ENCODE measurements at regions of chr3 and their contacts with region 1.

Region 1: GRCh38 chr3:192887047-192887446 is 30.6 kb downstream of the MB21D2 start:
- DNase-seq: peak in 2 of 5 donors; percentile 5 to 45
- H3K4me3 ChIP-seq: no peak overlapping the region
- H3K4me3 Mint-ChIP-seq: peak overlapping the region; percentile 20 to 84 (median 68)
- H3K27ac ChIP-seq: no peak overlapping the region
- H3K27ac Mint-ChIP-seq: peak overlapping the region; percentile 41 to 86 (median 72)
- H3K4me1 ChIP-seq: peaks cover 57% of the 10 kb centered on the region
- H3K4me1 Mint-ChIP-seq: peaks cover 6 to 55% (median 34%) of the 10 kb centered on the region in 4 donors
- H3K27me3 ChIP-seq: no peaks in the 10 kb centered on the region
- H3K27me3 Mint-ChIP-seq: no peaks in the 10 kb centered on the region

Region 2: GRCh38 chr3:192864941-192865340 is 22.1 kb before region 1 on chr3:
- CTCF ChIA-PET with region 1: no interaction called
- POLR2A ChIA-PET with region 1: no interaction called
- intact Hi-C with region 1: no loop called
- DNase-seq: no peak
- H3K4me3 ChIP-seq: no peak overlapping the region
- H3K4me3 Mint-ChIP-seq: peak overlapping the region in 2 of 8 donors; percentile 15 to 23
- H3K27ac ChIP-seq: no peak overlapping the region
- H3K27ac Mint-ChIP-seq: peak overlapping the region in 6 of 7 donors; percentile 11 to 70 (median 46)
- H3K4me1 ChIP-seq: peaks cover 6% of the 10 kb centered on the region
- H3K4me1 Mint-ChIP-seq: peaks cover 11 to 56% (median 31%) of the 10 kb centered on the region in 4 donors
- H3K27me3 ChIP-seq: no peaks in the 10 kb centered on the region
- H3K27me3 Mint-ChIP-seq: no peaks in the 10 kb centered on the region

Region 3: GRCh38 chr3:192899540-192899982 is 12.5 kb after region 1 on chr3:
- CTCF ChIA-PET with region 1: no interaction called
- POLR2A ChIA-PET with region 1: interaction called, 10 read pairs
- intact Hi-C with region 1: no loop called
- DNase-seq: no peak
- H3K4me3 ChIP-seq: no peak overlapping the region
- H3K4me3 Mint-ChIP-seq: peak overlapping the region in 4 of 8 donors; percentile 2 to 79 (median 57)
- H3K27ac ChIP-seq: peak overlapping the region; percentile 52
- H3K27ac Mint-ChIP-seq: peak overlapping the region in 6 of 7 donors; percentile 54 to 93 (median 89)
- H3K4me1 ChIP-seq: peaks cover 55% of the 10 kb centered on the region
- H3K4me1 Mint-ChIP-seq: peaks cover 27 to 73% (median 57%) of the 10 kb centered on the region in 4 donors
- H3K27me3 ChIP-seq: no peaks in the 10 kb centered on the region
- H3K27me3 Mint-ChIP-seq: peaks cover 0 to 3% of the 10 kb centered on the region in 2 donors

Region 4: GRCh38 chr3:192957441-192958021 is 70.5 kb after region 1 on chr3:
- CTCF ChIA-PET with region 1: no interaction called
- POLR2A ChIA-PET with region 1: no interaction called
- intact Hi-C with region 1: no loop called
- DNase-seq: no peak
- H3K4me3 ChIP-seq: no peak overlapping the region
- H3K4me3 Mint-ChIP-seq: no peak overlapping the region
- H3K27ac ChIP-seq: no peak overlapping the region
- H3K27ac Mint-ChIP-seq: no peak overlapping the region
- H3K4me1 ChIP-seq: no peaks in the 10 kb centered on the region
- H3K4me1 Mint-ChIP-seq: peaks cover 0 to 1% (median 0%) of the 10 kb centered on the region in 4 donors
- H3K27me3 ChIP-seq: no peaks in the 10 kb centered on the region
- H3K27me3 Mint-ChIP-seq: peaks cover 1 to 2% of the 10 kb centered on the region in 2 donors

Measured in CD4-positive, alpha-beta memory T cell (primary cell).